ENCODE measurements at regions of chrX and their contacts with region 1.

Region 1: DNA sequence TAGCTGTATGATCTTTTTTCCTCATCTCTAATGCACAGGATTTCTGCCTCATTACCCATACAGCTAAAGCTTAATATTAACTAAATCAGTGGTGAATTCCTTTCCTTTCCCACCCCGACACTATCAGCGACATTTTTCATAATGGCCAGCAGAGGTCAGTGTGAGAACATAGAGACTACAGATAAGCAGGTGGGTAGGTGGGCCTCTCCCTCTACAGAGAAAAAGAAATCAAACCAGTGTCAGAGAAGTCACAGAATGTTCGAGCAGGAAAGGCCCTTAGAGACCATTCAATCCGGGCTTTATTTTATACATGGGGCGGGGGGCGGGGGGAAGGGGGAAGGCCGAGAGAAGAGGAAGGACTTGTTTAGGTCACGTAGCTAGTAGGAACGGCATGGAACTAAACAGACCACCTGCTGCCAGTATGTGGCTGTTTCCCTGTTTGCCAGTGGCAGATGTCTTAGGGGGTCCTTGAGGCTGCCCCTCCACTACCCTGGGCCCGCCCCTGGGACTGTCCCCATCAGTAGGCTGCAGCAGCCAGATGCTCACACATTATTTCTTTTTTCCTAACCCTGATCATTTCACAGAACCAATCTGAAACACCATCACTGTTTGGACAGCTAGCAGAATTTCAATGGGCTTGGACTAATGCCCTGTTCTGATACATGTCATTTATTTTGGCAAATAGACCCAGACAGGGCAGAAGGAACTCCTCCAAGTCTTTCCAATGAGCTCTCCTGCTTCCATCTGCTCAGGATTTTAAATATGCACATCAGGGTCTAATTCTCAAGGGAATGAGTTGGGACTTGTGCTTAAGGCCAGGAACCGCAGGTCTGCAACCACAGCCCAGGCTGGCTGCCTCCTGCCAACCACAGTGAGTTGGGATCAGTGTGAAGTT is 133.4 kb downstream of the ATG4A start:
- DNase-seq: peak; percentile 18
- CTCF ChIP-seq: peak; percentile 61

Region 2: DNA sequence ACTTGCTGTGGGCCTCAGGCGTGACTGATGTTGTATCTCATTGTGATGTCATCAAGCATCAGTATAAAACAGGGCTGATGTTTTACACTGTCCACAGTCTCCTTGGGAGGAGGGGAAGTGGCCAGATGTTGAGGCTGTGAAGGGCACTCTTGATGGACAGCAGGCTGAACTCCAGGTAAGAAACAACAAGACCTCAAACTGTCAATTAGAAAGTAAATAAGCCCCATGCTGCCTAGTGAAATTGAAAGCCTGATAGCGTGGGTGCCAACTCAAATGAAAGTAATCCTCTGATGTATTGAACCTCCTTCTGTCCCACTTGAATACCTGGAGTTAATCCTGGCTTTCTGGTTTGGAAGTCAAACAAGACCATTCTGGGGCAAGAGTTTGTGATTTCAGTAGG is 160.4 kb before region 1 on chrX:
- CTCF ChIA-PET with region 1: no interaction called
- POLR2A ChIA-PET with region 1: no interaction called
- DNase-seq: no peak
- CTCF ChIP-seq: no peak

Region 3: DNA sequence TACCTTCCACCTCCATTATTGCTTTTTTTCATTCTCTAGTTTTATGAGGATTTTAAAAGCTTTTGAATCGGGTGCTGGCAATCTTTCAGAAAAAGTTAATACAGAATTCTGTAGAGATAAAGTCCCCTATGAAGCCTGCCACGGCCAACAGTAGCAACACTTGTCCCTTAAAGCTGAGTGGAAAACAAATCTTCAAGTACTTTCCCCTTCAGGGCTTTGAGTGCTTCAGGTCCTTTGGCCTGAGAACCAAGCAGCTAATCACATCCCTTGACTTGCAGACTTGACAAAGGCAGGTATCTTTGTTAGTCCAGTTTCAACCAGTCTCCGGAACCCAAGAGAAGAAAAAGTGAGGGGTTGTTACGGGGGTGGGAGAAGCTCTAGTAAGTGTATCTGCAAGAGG is 11.0 kb after region 1 on chrX:
- CTCF ChIA-PET with region 1: interaction called, 24 read pairs
- POLR2A ChIA-PET with region 1: no interaction called
- DNase-seq: no peak
- CTCF ChIP-seq: no peak

Region 4: DNA sequence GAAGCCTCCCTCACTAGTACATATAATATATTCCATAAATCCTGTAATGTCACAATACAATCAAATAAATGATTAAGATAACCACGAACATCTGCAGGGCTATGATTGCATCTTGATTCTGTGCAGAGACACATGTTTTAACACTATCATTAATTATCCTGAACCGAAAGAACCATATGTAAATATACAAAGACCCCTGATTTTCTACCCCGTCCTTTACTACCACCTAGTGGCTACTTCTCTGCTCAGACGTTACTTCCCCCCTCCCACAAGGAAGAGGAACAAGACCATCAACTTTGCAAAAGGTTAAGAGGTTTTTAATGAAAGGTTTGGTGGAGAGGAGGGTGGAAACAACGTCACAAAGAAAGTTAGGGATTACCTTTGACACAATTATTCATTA is 79.2 kb after region 1 on chrX:
- CTCF ChIA-PET with region 1: interaction called, 15 read pairs
- POLR2A ChIA-PET with region 1: no interaction called
- DNase-seq: no peak
- CTCF ChIP-seq: peak; percentile 10

Region 5: DNA sequence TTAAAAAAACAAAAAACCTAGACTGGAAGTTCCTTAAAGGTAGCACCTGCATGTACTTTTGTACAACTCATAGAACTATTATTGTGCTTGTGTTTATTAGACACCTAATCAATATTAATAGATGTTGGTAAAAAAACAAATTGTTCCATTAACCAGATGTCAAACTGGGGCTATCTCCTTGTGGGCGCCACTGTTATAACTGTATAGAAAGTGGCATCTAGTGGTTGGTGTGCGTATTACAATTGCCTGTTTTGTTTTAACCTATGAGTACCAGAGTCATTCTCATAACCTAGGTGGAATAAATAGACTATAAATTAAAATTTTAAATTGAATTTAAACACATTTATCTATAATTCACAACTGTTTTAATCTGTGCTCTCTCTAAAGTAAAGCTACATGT is 312.0 kb after region 1 on chrX:
- CTCF ChIA-PET with region 1: interaction called, 10 read pairs
- POLR2A ChIA-PET with region 1: no interaction called
- DNase-seq: peak; percentile 14
- CTCF ChIP-seq: peak; percentile 30